H1 (cell line): ENCODE measurements at regions of chr6 and their contacts with region 1.

Region 1: GRCh38 chr6:44185953-44186634 is 27.5 kb downstream of the CAPN11 start:
- DNase-seq: no peak
- H3K4me3 ChIP-seq: no peak overlapping the region
- H3K27ac ChIP-seq: no peak overlapping the region
- H3K4me1 ChIP-seq: peaks cover 2 to 10% (median 5%) of the 10 kb centered on the region in 4 experiments; a peak in 6 of 7 replicates
- H3K27me3 ChIP-seq: no peaks in the 10 kb centered on the region
- CTCF ChIP-seq: no peak
- EP300 ChIP-seq: no peak
- POLR2A ChIP-seq: no peak
- RAD21 ChIP-seq: no peak

Region 2: GRCh38 chr6:44201638-44202303 is 15.7 kb after region 1 on chr6:
- CTCF ChIA-PET with region 1: interaction called, 21 read pairs
- POLR2A ChIA-PET with region 1: interaction called, 19 read pairs
- DNase-seq: no peak
- H3K4me3 ChIP-seq: no peak overlapping the region; a peak in 1 of 8 replicates
- H3K27ac ChIP-seq: peak overlapping the region; percentile 93
- H3K4me1 ChIP-seq: peaks cover 20 to 30% (median 28%) of the 10 kb centered on the region in 4 experiments
- H3K27me3 ChIP-seq: no peaks in the 10 kb centered on the region
- CTCF ChIP-seq: no peak
- EP300 ChIP-seq: no peak
- POLR2A ChIP-seq: no peak
- RAD21 ChIP-seq: no peak

Region 3: GRCh38 chr6:44211284-44211683 is 25.2 kb after region 1 on chr6:
- CTCF ChIA-PET with region 1: interaction called, 17 read pairs
- POLR2A ChIA-PET with region 1: no interaction called
- DNase-seq: no peak
- H3K4me3 ChIP-seq: no peak overlapping the region
- H3K27ac ChIP-seq: no peak overlapping the region
- H3K4me1 ChIP-seq: peaks cover 4 to 15% (median 8%) of the 10 kb centered on the region in 4 experiments
- H3K27me3 ChIP-seq: no peaks in the 10 kb centered on the region
- CTCF ChIP-seq: no peak
- EP300 ChIP-seq: no peak
- POLR2A ChIP-seq: no peak
- RAD21 ChIP-seq: no peak

Region 4: DNA sequence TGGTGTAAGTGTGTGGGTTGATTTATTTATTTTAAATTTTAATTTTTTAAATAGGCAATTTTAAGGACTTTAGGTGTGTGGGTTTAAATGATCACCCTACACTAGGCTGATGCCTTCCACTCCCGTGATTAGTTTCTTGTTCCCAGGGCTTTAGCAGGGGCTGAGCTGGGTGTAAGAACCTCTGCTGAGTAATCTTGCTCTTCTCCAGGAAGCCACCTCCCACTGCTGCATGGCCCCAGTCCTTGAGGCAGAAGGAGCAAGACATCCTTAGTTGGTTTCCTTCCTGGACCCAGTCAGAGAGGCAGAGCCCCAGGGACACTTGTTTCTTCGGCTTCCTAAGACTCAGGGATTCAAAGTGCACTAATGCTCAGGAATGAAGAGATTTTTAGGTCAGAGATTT is 181.6 kb after region 1 on chr6:
- CTCF ChIA-PET with region 1: no interaction called
- POLR2A ChIA-PET with region 1: no interaction called
- DNase-seq: no peak
- H3K4me3 ChIP-seq: no peak overlapping the region
- H3K27ac ChIP-seq: no peak overlapping the region
- H3K4me1 ChIP-seq: no peaks in the 10 kb centered on the region
- H3K27me3 ChIP-seq: no peaks in the 10 kb centered on the region
- CTCF ChIP-seq: no peak
- EP300 ChIP-seq: no peak
- POLR2A ChIP-seq: no peak
- RAD21 ChIP-seq: no peak

Region 5: DNA sequence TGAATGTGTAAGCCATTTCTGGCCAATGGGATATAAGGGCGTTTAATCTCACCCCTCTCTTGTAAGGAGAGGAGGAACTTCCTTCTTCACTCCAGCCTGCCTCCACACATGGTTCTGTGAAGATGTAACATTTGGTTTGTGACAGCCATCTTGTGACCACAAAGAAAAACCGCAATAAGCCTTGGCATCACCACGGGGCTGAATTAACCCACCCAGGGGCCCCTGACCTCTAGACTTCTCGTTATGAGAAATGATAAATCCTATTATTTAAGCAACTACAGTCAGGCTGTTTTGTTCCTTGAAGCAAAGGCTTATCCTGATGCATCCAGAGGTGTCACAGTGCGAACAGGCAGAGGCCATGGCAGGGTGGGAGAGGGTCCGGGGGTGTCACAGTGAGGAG is 341.1 kb after region 1 on chr6:
- CTCF ChIA-PET with region 1: no interaction called
- POLR2A ChIA-PET with region 1: no interaction called
- DNase-seq: no peak
- H3K4me3 ChIP-seq: no peak overlapping the region
- H3K27ac ChIP-seq: no peak overlapping the region
- H3K4me1 ChIP-seq: peaks cover 0 to 3% (median 0%) of the 10 kb centered on the region in 4 experiments; a peak in 2 of 7 replicates
- H3K27me3 ChIP-seq: no peaks in the 10 kb centered on the region; a peak in 1 of 7 replicates
- CTCF ChIP-seq: no peak
- EP300 ChIP-seq: no peak
- POLR2A ChIP-seq: no peak
- RAD21 ChIP-seq: no peak